ENCODE measurements at regions of chr12 and their contacts with region 1.

Region 1: DNA sequence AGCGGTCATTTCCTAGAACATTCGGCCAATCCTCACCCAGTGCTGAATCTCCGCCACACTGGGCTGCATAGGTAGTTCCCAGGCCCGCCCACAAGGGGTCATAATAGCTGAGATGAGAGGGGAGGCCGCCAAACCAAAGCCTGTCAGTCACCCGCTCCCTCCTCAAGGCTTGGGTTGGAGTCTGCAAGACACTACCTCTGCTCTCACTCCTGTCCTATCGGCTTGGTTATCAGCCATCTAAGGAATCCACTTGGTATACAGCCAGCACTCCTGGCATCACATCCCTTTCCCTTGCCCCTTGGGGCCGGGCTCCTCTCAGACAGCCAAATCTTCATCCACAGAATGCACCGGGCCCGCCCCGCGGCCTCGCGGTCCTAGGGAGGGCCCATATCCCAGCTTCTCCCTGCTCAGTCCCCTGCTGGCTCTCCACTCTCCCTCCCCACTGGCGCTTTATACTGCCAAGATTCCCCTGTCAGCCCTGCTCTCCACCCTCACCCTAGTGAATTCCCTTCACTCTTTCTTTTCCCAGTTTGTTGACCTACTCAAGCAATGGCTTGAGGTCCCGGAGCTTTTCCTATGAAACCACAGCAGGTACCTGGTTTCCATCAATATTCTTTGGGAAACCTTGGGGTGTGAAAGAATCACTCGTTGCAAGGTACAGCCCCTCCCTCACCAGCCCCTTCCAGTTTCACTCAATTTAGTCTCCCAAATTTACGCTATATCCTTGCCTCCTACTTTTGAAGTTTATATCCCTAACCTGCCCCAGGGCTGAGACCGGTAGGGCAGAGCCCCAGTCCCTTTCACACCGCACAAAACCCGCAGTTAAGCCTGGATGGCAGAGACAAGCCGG is 1.4 kb downstream of the IFFO1 start:
- DNase-seq: no peak
- ATAC-seq: peak; percentile 83
- H3K4me3 ChIP-seq: peak overlapping the region; percentile 89
- H3K27ac ChIP-seq: peak overlapping the region; percentile 27
- H3K4me1 ChIP-seq: peaks cover 10% of the 10 kb centered on the region
- H3K27me3 ChIP-seq: no peaks in the 10 kb centered on the region
- CTCF ChIP-seq: peak; percentile 80 to 85 (median 84)
- EP300 ChIP-seq: no peak
- POLR2A ChIP-seq: no peak
- RAD21 ChIP-seq: peak; percentile 48

Region 2: GRCh38 chr12:6062757-6063735 is 491.3 kb before region 1 on chr12:
- CTCF ChIA-PET with region 1: no interaction called
- POLR2A ChIA-PET with region 1: no interaction called
- RAD21 ChIA-PET with region 1: no interaction called
- SMC1A ChIA-PET with region 1: no interaction called
- in situ Hi-C with region 1: no loop called
- intact Hi-C with region 1: no loop called
- DNase-seq: no peak
- ATAC-seq: peak; percentile 96
- H3K4me3 ChIP-seq: no peak overlapping the region
- H3K27ac ChIP-seq: no peak overlapping the region
- H3K4me1 ChIP-seq: no peaks in the 10 kb centered on the region
- H3K27me3 ChIP-seq: no peaks in the 10 kb centered on the region; a peak in 1 of 4 replicates
- CTCF ChIP-seq: peak; percentile 83 to 96 (median 94)
- EP300 ChIP-seq: no peak
- POLR2A ChIP-seq: no peak
- RAD21 ChIP-seq: peak; percentile 94

Region 3: DNA sequence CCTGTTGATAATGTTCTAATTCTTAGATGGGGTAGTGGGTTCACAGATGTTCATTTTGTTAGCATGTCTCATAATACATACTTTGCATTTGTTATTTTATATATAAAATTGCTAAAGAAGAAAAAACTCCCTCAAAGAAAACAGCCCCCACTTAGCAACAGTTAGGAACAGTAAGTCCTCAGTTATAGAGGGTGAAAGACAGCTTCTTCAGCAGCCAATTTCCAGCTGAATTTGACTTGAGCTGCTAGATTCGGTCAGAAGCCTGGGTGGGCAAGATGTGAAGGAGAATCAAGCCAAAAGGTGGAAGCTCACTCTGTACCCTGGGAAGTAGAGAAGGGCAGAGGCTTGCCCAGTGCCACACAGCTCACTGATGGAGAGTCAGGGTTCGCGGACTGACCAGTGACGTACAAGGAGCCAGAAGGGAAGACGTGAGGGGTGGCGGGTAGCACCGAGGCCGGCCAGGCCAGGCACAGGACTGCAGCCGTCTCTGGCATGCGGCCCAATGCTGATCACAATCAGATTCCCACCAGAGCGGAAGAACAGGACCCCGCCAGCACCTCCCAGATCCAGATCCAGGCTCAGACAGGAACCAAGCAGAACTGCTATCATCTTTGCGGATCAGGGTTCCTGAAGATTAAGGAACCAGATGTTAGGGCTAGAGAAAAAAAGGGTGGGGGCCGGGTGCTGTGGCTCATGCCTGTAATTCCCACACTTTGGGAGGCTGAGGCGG is 399.5 kb before region 1 on chr12:
- CTCF ChIA-PET with region 1: no interaction called
- POLR2A ChIA-PET with region 1: no interaction called
- RAD21 ChIA-PET with region 1: no interaction called
- SMC1A ChIA-PET with region 1: no interaction called
- in situ Hi-C with region 1: no loop called
- intact Hi-C with region 1: no loop called
- DNase-seq: no peak
- ATAC-seq: no peak
- H3K4me3 ChIP-seq: no peak overlapping the region
- H3K27ac ChIP-seq: no peak overlapping the region
- H3K4me1 ChIP-seq: no peaks in the 10 kb centered on the region
- H3K27me3 ChIP-seq: no peaks in the 10 kb centered on the region
- CTCF ChIP-seq: no peak
- EP300 ChIP-seq: no peak
- POLR2A ChIP-seq: no peak
- RAD21 ChIP-seq: no peak

Region 4: GRCh38 chr12:6570264-6570887 is 16.0 kb after region 1 on chr12:
- CTCF ChIA-PET with region 1: interaction called, 16 read pairs
- POLR2A ChIA-PET with region 1: interaction called, 5 read pairs
- RAD21 ChIA-PET with region 1: no interaction called
- SMC1A ChIA-PET with region 1: interaction called, 8 read pairs
- in situ Hi-C with region 1: no loop called
- intact Hi-C with region 1: no loop called
- DNase-seq: no peak
- ATAC-seq: peak; percentile 54
- H3K4me3 ChIP-seq: no peak overlapping the region
- H3K27ac ChIP-seq: no peak overlapping the region
- H3K4me1 ChIP-seq: peaks cover 4% of the 10 kb centered on the region; the same call in 1 of the 2 replicates
- H3K27me3 ChIP-seq: no peaks in the 10 kb centered on the region
- CTCF ChIP-seq: peak; percentile 62 to 75 (median 64)
- EP300 ChIP-seq: no peak
- POLR2A ChIP-seq: 0 out of 2 replicates have a peak, but pooled peaks have one; percentile 37
- RAD21 ChIP-seq: peak; percentile 21; the same call in 1 of the 2 replicates

Region 5: GRCh38 chr12:6764011-6764828 is 209.8 kb after region 1 on chr12:
- CTCF ChIA-PET with region 1: interaction called, 12 read pairs
- POLR2A ChIA-PET with region 1: no interaction called
- RAD21 ChIA-PET with region 1: no interaction called
- SMC1A ChIA-PET with region 1: no interaction called
- in situ Hi-C with region 1: no loop called
- intact Hi-C with region 1: no loop called
- DNase-seq: peak; percentile 98
- ATAC-seq: peak; percentile 94
- H3K4me3 ChIP-seq: peak overlapping the region; percentile 38; the same call in 1 of the 2 replicates
- H3K27ac ChIP-seq: peak overlapping the region; percentile 76
- H3K4me1 ChIP-seq: peaks cover 30% of the 10 kb centered on the region
- H3K27me3 ChIP-seq: no peaks in the 10 kb centered on the region
- CTCF ChIP-seq: no peak
- EP300 ChIP-seq: no peak
- POLR2A ChIP-seq: no peak; the same call in 1 of the 2 replicates
- RAD21 ChIP-seq: no peak